AG04449 (cell line): ENCODE measurements at regions of chr16 and their contacts with region 1.

Region 1: GRCh38 chr16:11530171-11530940 is 56.4 kb downstream of the LITAF start:
- DNase-seq: no peak
- H3K4me3 ChIP-seq: no peak overlapping the region
- CTCF ChIP-seq: no peak

Region 2: GRCh38 chr16:11515540-11516430 is 14.6 kb before region 1 on chr16:
- CTCF ChIA-PET with region 1: interaction called, 31 read pairs
- POLR2A ChIA-PET with region 1: no interaction called
- DNase-seq: no peak
- H3K4me3 ChIP-seq: no peak overlapping the region
- CTCF ChIP-seq: no peak

Region 3: DNA sequence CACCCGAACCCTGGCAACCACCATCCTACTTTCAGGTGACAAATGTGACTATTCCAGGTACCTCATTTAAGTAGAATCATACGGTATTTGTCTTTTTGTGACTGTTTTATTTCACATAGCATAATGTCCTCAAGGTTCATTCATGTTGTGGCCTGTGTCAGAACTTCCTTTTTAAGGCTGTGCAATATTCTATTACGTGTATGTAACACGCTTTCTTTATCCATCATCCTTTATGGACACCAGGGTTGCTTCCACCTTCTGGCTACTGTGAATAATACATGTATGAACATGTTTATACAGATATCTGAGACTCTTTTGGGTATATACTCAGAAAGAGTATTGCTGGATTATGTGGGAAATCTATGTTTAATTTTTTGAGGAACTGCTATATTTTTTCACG is 349.7 kb after region 1 on chr16:
- CTCF ChIA-PET with region 1: no interaction called
- POLR2A ChIA-PET with region 1: no interaction called
- DNase-seq: no peak
- H3K4me3 ChIP-seq: no peak overlapping the region
- CTCF ChIP-seq: no peak